Mammary epithelial cell (primary cell): ENCODE measurements at regions of chr15 and their contacts with region 1.

Region 1: GRCh38 chr15:55993111-55993803 is at the start of gene NEDD4:
- DNase-seq: peak; percentile 86
- H3K4me3 ChIP-seq: peak within 1 kb of the TSS; percentile 69 to 97 (median 89)
- H3K27ac ChIP-seq: peak within 1 kb of the TSS; percentile 92
- H3K4me1 ChIP-seq: peaks cover 27% of the 10 kb centered on the region
- H3K27me3 ChIP-seq: no peaks in the 10 kb centered on the region
- CTCF ChIP-seq: peak; percentile 41 to 66
- total RNA-seq, gene NEDD4: 27.5 to 31.6 TPM

Region 2: DNA sequence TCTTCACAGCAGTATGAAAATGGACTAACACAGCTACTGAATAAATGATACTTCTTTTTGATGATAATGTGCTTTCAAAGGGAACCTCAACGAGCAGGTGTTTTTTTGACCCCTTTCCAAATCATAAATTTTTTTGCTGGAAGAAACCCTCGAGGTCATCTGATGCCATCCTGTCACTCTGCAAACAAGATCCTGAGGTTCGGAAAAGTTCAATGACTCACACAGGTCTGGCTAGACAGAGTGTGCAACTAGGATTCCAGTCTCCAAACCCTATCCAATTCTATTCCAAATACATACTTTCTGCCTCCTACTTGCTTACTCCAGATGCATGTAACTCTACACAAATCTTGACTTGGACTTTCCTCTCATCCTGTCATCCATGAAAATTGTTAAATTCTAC is 124.5 kb before region 1 on chr15:
- CTCF ChIA-PET with region 1: interaction called, 20 read pairs
- dilution Hi-C with region 1: no loop called
- in situ Hi-C with region 1: no loop called
- intact Hi-C with region 1: no loop called
- DNase-seq: no peak
- H3K4me3 ChIP-seq: no peak overlapping the region
- H3K27ac ChIP-seq: no peak overlapping the region
- H3K4me1 ChIP-seq: no peaks in the 10 kb centered on the region
- H3K27me3 ChIP-seq: no peaks in the 10 kb centered on the region
- CTCF ChIP-seq: no peak

Region 3: GRCh38 chr15:55897560-55898336 is 95.5 kb before region 1 on chr15:
- CTCF ChIA-PET with region 1: no interaction called
- dilution Hi-C with region 1: no loop called
- in situ Hi-C with region 1: no loop called
- intact Hi-C with region 1: loop called (anchors 2 kb)
- DNase-seq: peak; percentile 79
- H3K4me3 ChIP-seq: no peak overlapping the region
- H3K27ac ChIP-seq: peak overlapping the region; percentile 77
- H3K4me1 ChIP-seq: peaks cover 14% of the 10 kb centered on the region
- H3K27me3 ChIP-seq: no peaks in the 10 kb centered on the region
- CTCF ChIP-seq: peak; percentile 91 to 99

Region 4: GRCh38 chr15:55959744-55960447 is 33.4 kb before region 1 on chr15:
- CTCF ChIA-PET with region 1: no interaction called
- dilution Hi-C with region 1: no loop called
- in situ Hi-C with region 1: no loop called
- intact Hi-C with region 1: no loop called
- DNase-seq: no peak
- H3K4me3 ChIP-seq: no peak overlapping the region
- H3K27ac ChIP-seq: no peak overlapping the region
- H3K4me1 ChIP-seq: no peaks in the 10 kb centered on the region
- H3K27me3 ChIP-seq: no peaks in the 10 kb centered on the region
- CTCF ChIP-seq: no peak

Region 5: DNA sequence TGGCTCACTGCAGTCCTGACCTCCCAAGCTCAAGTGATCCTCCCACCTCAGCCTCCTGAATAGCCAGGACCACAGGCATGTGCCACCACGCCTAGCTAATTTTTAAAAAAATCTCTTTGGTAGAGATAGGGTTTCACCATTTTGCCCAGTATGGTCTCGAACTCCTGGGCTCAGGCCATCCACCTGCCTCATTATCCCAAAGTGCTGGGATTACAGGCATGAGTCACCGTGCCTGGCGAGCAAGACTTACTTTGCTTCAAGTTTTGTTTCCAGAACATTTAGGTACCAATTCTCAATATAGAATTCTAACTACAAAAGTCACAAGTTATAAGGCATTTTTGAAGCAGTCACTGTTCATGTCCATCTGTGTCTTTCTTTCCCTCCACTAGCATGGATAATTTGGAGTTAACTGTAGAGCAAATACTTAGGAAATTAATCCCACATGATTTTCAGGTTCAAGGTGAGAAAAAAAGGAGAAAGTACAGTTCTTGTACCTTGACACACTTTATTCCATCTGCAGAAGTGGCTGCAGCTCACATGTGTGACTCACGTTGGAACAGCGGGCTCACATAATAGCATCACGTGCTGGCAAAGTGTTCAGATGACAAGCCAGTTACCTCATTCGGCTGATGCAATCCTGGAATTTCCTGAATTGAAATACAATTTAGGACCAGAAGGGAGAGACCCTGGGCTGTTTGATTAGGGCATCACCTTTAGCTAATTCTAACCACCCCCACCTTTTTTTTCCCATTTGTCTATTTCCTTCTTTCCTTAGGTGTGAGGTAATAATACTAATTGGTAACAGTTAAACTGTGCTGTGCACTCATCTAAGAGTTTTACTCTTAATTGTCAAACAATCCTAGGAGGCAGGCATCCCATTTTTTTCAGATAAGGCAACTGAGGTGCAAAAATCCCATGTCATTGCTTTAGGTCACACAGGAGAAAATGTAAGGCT is 47.1 kb after region 1 on chr15:
- CTCF ChIA-PET with region 1: no interaction called
- dilution Hi-C with region 1: loop called (anchors 5 kb)
- in situ Hi-C with region 1: loop called (anchors 5 kb)
- intact Hi-C with region 1: loop called (anchors 1 kb)
- DNase-seq: peak; percentile 97
- H3K4me3 ChIP-seq: no peak overlapping the region
- H3K27ac ChIP-seq: peak overlapping the region; percentile 97
- H3K4me1 ChIP-seq: peaks cover 47% of the 10 kb centered on the region
- H3K27me3 ChIP-seq: no peaks in the 10 kb centered on the region
- CTCF ChIP-seq: no peak

Region 6: DNA sequence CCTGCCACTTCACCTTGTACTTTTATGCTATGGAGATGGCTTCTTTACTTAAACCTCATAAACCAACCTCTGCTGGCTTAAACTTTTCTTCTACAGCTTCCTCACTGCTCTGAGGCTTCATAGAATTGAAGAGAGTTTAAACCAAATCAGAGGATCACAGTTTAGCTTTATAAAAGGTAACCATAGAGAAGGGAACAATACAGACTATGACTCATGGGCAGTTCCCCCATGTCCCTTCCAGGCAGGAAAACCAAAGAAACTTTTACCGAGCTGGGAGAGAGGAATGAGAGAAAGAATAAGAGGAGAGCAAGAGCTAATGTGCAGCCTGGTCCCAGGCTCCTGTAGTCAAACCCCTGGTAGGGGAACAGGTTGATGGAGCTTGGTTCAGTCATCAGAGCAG is 54.1 kb after region 1 on chr15:
- CTCF ChIA-PET with region 1: no interaction called
- dilution Hi-C with region 1: loop called (anchors 5 kb)
- in situ Hi-C with region 1: loop called in 1 of 2 experiments (anchors 5 kb)
- intact Hi-C with region 1: loop called (anchors 1 kb)
- DNase-seq: peak; percentile 70
- H3K4me3 ChIP-seq: no peak overlapping the region
- H3K27ac ChIP-seq: peak overlapping the region; percentile 59
- H3K4me1 ChIP-seq: peaks cover 27% of the 10 kb centered on the region
- H3K27me3 ChIP-seq: no peaks in the 10 kb centered on the region
- CTCF ChIP-seq: no peak